Gastrocnemius medialis (tissue), 4 donors: ENCODE measurements at regions of chr7 and their contacts with region 1.

Region 1: GRCh38 chr7:100874577-100875355 is at the start of gene SRRT:
- DNase-seq: peak; percentile 98
- ATAC-seq: peak; percentile 95 to 97
- H3K4me3 ChIP-seq: peak within 1 kb of the TSS; percentile 70 to 99 (median 90)
- H3K27ac ChIP-seq: peak within 1 kb of the TSS; percentile 93 to 98 (median 96)
- H3K4me1 ChIP-seq: peaks cover 34 to 42% of the 10 kb centered on the region in 2 donors
- H3K27me3 ChIP-seq: no peaks in the 10 kb centered on the region
- CTCF ChIP-seq: peak; percentile 66 to 91 (median 78)
- POLR2A ChIP-seq: peak; percentile 91 to 98
- total RNA-seq, gene SRRT: 35.0 to 47.3 (median 39.8) TPM

Region 2: DNA sequence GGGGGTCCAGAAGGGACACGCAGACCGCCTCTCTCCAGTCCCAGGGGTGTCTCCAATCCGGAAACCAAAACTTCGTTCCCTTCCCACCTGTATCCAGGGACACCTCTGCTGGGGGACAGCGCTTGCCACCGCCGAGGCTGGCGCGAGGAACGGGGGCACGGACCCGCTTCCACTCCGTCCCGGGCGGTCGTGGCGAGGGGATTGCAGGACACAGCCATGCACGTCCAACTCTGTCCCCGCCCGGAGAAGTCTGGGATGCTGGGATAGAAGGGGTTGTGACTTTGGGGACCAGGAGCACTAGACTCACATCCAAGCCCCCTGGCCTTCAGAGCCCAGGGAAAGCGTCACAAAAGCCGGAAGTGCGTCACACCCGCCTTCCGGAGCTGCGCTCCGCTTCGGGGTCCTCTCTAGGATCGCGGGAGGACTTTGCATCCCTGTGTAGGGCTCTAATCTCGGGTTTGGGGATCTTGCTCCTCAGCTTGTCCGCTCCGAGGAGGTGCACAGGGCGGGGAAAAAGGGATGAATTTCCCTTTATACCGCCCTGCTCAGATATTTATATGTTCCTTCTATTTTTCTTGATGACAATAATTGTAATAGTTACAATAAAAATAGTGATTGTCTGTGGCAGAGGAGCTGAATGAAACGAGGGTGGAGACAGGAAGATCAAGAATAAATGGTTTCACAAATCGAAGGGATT is 1322.9 kb before region 1 on chr7 and contains the start of gene FAM200A:
- in situ Hi-C with region 1: no loop called
- intact Hi-C with region 1: loop called (anchors 10 kb)
- DNase-seq: peak; percentile 74 to 76
- ATAC-seq: peak; percentile 97 to 98
- H3K4me3 ChIP-seq: peak within 1 kb of the TSS; percentile 92 to 99 (median 96)
- H3K27ac ChIP-seq: peak within 1 kb of the TSS; percentile 83 to 94 (median 92)
- H3K4me1 ChIP-seq: peaks cover 14 to 15% of the 10 kb centered on the region in 2 donors
- H3K27me3 ChIP-seq: no peaks in the 10 kb centered on the region
- CTCF ChIP-seq: no peak
- POLR2A ChIP-seq: peak; percentile 65 to 81
- total RNA-seq, gene FAM200A: 2.3 to 5.7 (median 3.8) TPM

Region 3: GRCh38 chr7:100428199-100428966 is 446.4 kb before region 1 on chr7 and contains the start of gene ZCWPW1:
- in situ Hi-C with region 1: loop called in 1 of 4 experiments (anchors 25 kb)
- intact Hi-C with region 1: no loop called
- DNase-seq: peak; percentile 90 to 95
- ATAC-seq: peak; percentile 67 to 68
- H3K4me3 ChIP-seq: peak within 1 kb of the TSS; percentile 74 to 88 (median 83)
- H3K27ac ChIP-seq: peak within 1 kb of the TSS; percentile 90 to 99 (median 98)
- H3K4me1 ChIP-seq: peaks cover 24 to 29% of the 10 kb centered on the region in 2 donors
- H3K27me3 ChIP-seq: no peaks in the 10 kb centered on the region
- CTCF ChIP-seq: peak in 2 of 5 experiments; percentile 5 to 17
- POLR2A ChIP-seq: peak; percentile 98 to 99
- total RNA-seq, gene ZCWPW1: 1.6 to 8.5 (median 2.7) TPM

Region 4: GRCh38 chr7:100469227-100470044 is 405.3 kb before region 1 on chr7:
- in situ Hi-C with region 1: loop called in 2 of 4 experiments (anchors 25 kb)
- intact Hi-C with region 1: no loop called
- DNase-seq: peak; percentile 67 to 80
- ATAC-seq: peak; percentile 76 to 80
- H3K4me3 ChIP-seq: no peak overlapping the region
- H3K27ac ChIP-seq: peak overlapping the region in 1 of 4 donors; percentile 52
- H3K4me1 ChIP-seq: peaks cover 7 to 18% of the 10 kb centered on the region in 2 donors
- H3K27me3 ChIP-seq: no peaks in the 10 kb centered on the region
- CTCF ChIP-seq: peak; percentile 90 to 98 (median 95)
- POLR2A ChIP-seq: no peak

Region 5: DNA sequence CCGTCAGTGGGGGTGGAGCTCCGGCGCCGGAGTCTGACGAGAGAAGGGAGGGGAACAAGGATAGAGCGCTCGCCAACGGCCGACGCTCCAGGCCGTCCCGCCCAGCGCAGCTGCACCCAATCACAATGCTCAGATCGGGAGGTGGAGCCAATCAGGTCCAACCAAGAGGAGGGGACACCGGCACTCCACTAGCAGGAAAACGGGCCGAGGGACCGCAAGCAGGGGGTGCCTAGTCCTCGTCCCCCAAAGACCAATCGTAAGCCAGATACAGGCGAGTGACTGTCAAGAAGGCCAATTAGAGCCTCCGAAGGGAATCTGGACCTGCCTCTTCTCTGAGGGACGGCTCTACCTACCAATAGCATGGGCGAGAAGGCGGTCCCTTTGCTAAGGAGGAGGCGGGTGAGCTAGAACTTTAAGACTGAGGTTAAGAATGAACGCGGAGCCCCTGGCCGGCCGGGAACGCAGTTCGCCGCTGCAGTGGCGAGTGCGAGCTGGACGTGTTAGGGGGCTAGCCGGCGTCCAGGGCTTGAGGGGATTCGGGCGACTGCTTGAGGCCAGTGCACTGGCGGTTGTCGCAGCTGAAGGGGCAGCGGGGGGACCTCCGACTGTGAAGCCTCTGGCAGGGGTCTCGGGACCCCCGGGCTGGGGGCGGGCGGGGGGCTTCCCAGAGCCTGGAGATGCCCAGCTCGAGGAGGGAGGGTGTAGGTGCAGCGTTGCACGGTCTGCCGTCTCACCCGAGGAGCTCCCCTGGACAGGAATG is 288.3 kb before region 1 on chr7 and contains the start of gene FBXO24:
- in situ Hi-C with region 1: loop called in 1 of 4 experiments (anchors 25 kb)
- intact Hi-C with region 1: no loop called
- DNase-seq: peak; percentile 100
- ATAC-seq: peak; percentile 96 to 98
- H3K4me3 ChIP-seq: peak within 1 kb of the TSS; percentile 89 to 98 (median 96)
- H3K27ac ChIP-seq: peak within 1 kb of the TSS; percentile 92 to 97 (median 96)
- H3K4me1 ChIP-seq: peaks cover 11 to 30% of the 10 kb centered on the region in 2 donors
- H3K27me3 ChIP-seq: no peaks in the 10 kb centered on the region
- CTCF ChIP-seq: no peak
- POLR2A ChIP-seq: no peak
- total RNA-seq, gene FBXO24: not detected

Region 6: GRCh38 chr7:100889761-100890634 is 15.2 kb after region 1 on chr7:
- in situ Hi-C with region 1: no loop called
- intact Hi-C with region 1: loop called (anchors 1 kb)
- DNase-seq: peak; percentile 92
- ATAC-seq: peak; percentile 78 to 82
- H3K4me3 ChIP-seq: peak overlapping the region; percentile 69 to 89 (median 85)
- H3K27ac ChIP-seq: peak overlapping the region; percentile 95 to 99 (median 97)
- H3K4me1 ChIP-seq: peaks cover 28 to 49% of the 10 kb centered on the region in 2 donors
- H3K27me3 ChIP-seq: peaks cover 0 to under 1% (median 0%) of the 10 kb centered on the region in 3 donors
- CTCF ChIP-seq: peak in 1 of 5 experiments; percentile 10
- POLR2A ChIP-seq: peak; percentile 75 to 76

Region 7: DNA sequence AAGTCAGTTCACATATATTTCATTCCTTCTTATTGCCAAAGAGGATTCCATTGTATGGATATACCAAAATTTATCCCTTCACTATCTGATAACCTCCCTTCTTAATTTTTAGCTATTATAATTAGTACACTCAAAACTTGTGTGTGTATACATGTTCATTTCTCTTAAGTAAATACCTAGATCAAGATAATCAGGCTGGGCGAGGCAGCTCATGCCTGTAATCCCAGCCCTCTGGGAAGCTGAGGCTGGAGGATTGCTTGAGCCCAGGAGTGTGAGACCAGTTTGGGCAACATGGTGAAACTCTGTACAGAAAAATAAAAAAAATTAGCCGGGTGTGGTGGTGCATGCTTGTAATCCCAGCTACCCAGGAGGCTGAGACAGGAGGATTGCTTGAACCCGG is 36.7 kb after region 1 on chr7:
- in situ Hi-C with region 1: no loop called
- intact Hi-C with region 1: no loop called
- DNase-seq: no peak
- ATAC-seq: no peak
- H3K4me3 ChIP-seq: no peak overlapping the region
- H3K27ac ChIP-seq: no peak overlapping the region
- H3K4me1 ChIP-seq: peaks cover 0 to 3% of the 10 kb centered on the region in 2 donors
- H3K27me3 ChIP-seq: no peaks in the 10 kb centered on the region
- CTCF ChIP-seq: no peak
- POLR2A ChIP-seq: no peak

Region 8: DNA sequence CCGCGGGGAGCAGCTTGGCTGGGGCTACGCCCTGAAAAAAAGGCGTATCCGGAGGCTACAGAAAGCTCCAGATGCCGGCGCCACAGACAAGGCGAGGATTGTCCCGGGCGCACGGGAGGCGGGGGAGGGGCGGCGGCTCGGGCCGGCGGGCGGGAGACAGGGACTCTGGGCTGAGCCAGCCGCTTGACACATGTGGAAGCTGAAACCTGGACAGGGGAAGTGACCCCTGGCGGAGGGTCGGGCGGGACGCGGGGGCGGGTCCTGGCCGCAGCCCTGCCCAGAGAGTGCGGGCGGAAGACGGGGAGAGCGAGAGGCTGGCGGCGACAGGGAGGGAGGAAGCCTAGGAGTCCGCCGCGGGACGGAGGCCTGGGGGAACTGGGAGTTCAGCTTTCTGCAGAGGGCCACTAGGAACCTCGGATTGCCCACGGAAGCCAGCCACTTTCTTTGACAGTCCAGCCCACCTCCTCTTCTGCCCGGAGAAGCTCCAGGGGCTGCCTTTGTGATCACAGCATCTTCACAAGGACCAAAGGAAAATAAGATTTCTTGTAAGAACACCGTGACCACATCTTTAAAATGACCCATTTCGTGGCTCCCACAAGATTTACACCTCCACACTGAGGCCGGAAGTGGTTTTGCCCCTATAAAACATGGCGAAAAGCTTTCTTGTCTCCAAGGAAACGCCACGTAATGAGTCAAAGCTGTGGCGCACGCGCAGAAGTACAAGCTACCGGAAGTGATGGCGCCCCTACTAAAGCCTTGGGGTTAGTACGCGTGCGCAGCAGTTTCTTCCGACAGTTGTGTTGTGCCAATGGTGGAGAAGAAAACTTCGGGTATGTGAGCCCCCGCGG is 342.8 kb after region 1 on chr7 and contains the starts of genes PLOD3 and ZNHIT1:
- in situ Hi-C with region 1: no loop called
- intact Hi-C with region 1: loop called (anchors 5 kb)
- DNase-seq: peak; percentile 95 to 96
- ATAC-seq: peak; percentile 98 to 99
- H3K4me3 ChIP-seq: peak within 1 kb of the TSS; percentile 68 to 91 (median 74)
- H3K27ac ChIP-seq: peak within 1 kb of the TSS; percentile 82 to 92 (median 88)
- H3K4me1 ChIP-seq: peaks cover 23 to 32% of the 10 kb centered on the region in 2 donors
- H3K27me3 ChIP-seq: no peaks in the 10 kb centered on the region
- CTCF ChIP-seq: peak in 2 of 5 experiments; percentile 41 to 48
- POLR2A ChIP-seq: peak in 1 of 2 donors; percentile 16
- total RNA-seq, gene PLOD3: 8.2 to 24.2 (median 15.5) TPM
- total RNA-seq, gene ZNHIT1: 66.7 to 83.9 (median 71.9) TPM